ENCODE measurements at regions of chr12 and their contacts with region 1.

Region 1: GRCh38 chr12:66169221-66170170 is at the start of gene TMBIM4:
- DNase-seq: peak; percentile 88 to 96 (median 95)
- H3K4me3 ChIP-seq: peak within 1 kb of the TSS; percentile 77 to 100 (median 86)
- H3K4me3 Mint-ChIP-seq: peak within 1 kb of the TSS; percentile 90 to 97
- H3K27ac ChIP-seq: peak within 1 kb of the TSS; percentile 99
- H3K27ac Mint-ChIP-seq: peak within 1 kb of the TSS; percentile 99 to 100 (median 99)
- H3K4me1 ChIP-seq: peaks cover 45 to 68% of the 10 kb centered on the region in 2 donors
- H3K4me1 Mint-ChIP-seq: peaks cover 55% of the 10 kb centered on the region
- H3K27me3 ChIP-seq: no peaks in the 10 kb centered on the region
- H3K27me3 Mint-ChIP-seq: peaks cover 0 to 2% (median 0%) of the 10 kb centered on the region in 3 donors
- CTCF ChIP-seq: peak; percentile 67
- polyA plus RNA-seq, gene TMBIM4: 153 to 823 (median 694) TPM

Region 2: DNA sequence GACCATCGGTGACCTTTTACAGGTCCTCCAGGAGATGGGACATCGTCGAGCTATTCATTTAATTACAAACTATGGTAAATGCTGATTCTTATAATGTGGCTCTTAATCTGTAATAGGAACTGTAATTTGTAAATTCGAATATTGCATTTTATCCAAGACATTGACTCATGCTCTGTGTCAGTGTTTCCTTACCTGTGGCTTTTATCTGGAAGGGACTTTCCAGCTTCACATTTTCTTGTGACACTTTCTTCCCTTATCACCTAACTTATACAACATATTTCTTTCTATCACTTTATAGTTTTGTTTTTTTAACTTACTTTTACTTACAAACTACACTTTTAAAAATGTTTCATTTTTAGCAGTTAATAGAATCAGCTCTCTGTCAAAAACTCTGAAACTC is 34.3 kb after region 1 on chr12:
- intact Hi-C with region 1: loop called in 1 of 2 experiments (anchors 5 kb)
- DNase-seq: peak in 1 of 3 donors; percentile 27
- H3K4me3 ChIP-seq: no peak overlapping the region
- H3K4me3 Mint-ChIP-seq: no peak overlapping the region
- H3K27ac ChIP-seq: peak overlapping the region in 1 of 2 donors; percentile 27
- H3K27ac Mint-ChIP-seq: peak overlapping the region in 2 of 7 donors; percentile 5 to 41
- H3K4me1 ChIP-seq: peaks cover 4 to 14% of the 10 kb centered on the region in 2 donors
- H3K4me1 Mint-ChIP-seq: peaks cover 35% of the 10 kb centered on the region
- H3K27me3 ChIP-seq: no peaks in the 10 kb centered on the region
- H3K27me3 Mint-ChIP-seq: no peaks in the 10 kb centered on the region
- CTCF ChIP-seq: no peak

Region 3: DNA sequence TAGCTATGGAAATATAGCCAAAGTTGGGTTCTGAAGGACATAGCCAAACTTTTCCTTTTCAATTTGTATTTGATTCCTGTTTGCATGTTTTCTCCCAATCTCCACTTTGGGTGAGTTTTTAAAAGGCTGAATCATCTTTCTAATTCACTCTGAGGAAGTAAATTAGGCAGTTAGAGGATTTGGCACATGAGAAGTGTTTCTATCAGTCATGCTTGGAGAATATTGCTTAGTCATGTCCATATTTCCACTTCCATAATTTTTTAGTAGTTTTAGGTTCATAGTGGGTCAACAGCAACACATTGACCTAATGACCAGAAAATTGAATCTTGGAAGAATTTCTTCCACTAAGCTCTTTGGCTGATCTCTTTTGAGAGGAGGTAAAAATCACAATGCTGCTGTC is 41.3 kb after region 1 on chr12:
- intact Hi-C with region 1: loop called in 1 of 2 experiments (anchors 10 kb)
- DNase-seq: peak; percentile 48 to 77 (median 72)
- H3K4me3 ChIP-seq: peak overlapping the region in 1 of 3 experiments; percentile 38
- H3K4me3 Mint-ChIP-seq: no peak overlapping the region
- H3K27ac ChIP-seq: peak overlapping the region in 1 of 2 donors; percentile 54
- H3K27ac Mint-ChIP-seq: peak overlapping the region; percentile 58 to 87 (median 83)
- H3K4me1 ChIP-seq: peaks cover 23 to 39% of the 10 kb centered on the region in 2 donors
- H3K4me1 Mint-ChIP-seq: peaks cover 53% of the 10 kb centered on the region
- H3K27me3 ChIP-seq: no peaks in the 10 kb centered on the region
- H3K27me3 Mint-ChIP-seq: no peaks in the 10 kb centered on the region
- CTCF ChIP-seq: no peak

Measured in CD14-positive monocyte (primary cell).